Uterus (tissue), 4 donors: ENCODE measurements at regions of chr2 and their contacts with region 1.

Region 1: DNA sequence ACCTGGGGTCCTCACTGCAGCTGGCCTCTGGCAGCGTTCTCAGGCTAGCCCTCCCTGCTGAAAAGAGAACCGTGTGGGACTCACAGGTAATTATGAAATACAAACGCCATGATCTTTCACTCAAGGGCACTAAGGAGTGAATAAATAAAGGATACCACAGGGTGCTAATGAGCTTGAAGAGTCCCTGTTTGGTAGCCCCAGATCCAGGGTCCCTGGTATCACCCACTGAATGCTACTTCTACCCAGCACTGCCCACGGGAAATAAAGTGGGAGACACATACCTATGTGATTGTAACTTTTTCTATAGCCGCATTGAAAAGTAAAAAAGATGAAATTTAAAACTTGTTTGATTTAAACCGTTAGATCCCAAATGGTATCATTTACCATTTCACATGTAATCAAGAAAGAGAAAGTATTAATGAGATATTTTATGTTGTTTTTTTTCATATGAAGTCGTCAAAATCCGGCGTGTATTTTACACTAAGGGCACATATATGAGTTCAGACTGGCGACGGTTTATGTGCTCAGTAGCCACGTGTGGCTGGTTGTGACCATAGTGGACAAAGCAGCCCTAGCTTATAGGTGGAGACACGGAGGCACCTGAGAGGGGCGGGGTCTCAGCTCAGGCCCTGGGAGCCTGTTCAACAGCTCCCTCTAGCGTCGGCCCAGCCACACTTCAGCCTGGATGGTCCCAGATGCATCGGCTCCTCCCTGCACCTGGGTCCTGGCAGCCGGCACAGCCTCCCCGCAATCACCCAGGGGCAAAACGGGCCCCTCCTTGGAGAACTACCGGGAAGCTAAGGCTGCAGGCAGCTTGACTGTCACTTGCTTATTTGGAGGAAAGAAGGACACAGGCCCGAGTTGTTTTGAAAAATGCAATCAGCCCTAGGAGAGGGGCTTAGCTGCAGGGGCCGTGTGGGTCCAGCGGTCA is 39.2 kb downstream of the ODC1 start:
- DNase-seq: peak; percentile 77 to 81
- H3K4me3 ChIP-seq: no peak overlapping the region
- H3K27ac ChIP-seq: peak overlapping the region; percentile 78 to 81
- H3K4me1 ChIP-seq: peaks cover 0 to 31% of the 10 kb centered on the region in 2 donors
- H3K27me3 ChIP-seq: no peaks in the 10 kb centered on the region
- CTCF ChIP-seq: peak; percentile 91 to 96 (median 93)
- POLR2A ChIP-seq: no peak

Region 2: GRCh38 chr2:10079234-10079869 is 329.6 kb before region 1 on chr2:
- intact Hi-C with region 1: no loop called
- DNase-seq: peak; percentile 58 to 69
- H3K4me3 ChIP-seq: peak overlapping the region; percentile 34 to 72
- H3K27ac ChIP-seq: peak overlapping the region; percentile 87 to 94
- H3K4me1 ChIP-seq: peaks cover 0 to 9% of the 10 kb centered on the region in 2 donors
- H3K27me3 ChIP-seq: no peaks in the 10 kb centered on the region
- CTCF ChIP-seq: no peak
- POLR2A ChIP-seq: no peak

Region 3: DNA sequence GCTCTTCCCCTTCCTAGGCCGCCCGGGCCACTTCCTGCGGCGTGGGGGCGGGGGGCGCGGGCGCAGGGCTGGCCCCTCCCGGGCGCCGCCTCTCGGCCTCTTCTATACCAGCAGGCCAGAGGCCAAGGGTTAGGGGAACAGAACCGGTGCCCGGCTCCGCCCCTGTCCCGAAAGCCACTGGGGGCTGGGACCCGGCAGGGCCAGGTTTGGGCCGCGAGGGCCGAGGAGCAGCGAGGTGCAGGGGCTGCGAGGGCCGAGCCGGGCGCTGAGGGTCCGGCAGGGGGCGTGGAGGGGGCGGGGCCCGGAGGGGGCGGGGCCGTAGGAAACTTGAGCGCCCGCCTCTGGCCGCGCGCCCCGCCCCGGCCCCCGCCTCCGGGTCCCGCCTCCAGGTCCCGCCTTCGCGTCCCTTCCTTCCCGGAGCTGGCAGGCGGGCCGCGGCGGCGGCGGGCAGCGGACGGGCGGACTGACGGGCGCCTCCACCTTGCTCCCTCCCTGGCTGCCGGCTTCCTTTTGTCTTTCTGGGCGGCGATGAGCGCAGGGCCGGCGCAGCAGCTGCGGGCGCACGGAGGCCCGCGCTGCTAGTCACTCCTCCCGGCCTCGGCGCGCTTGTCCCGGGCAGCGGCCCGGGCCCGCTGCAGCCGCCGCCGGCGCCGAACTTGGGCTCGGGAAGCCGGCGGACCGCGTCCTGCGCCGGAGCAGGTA is 106.3 kb before region 1 on chr2 and contains the start of gene HPCAL1:
- intact Hi-C with region 1: loop called (anchors 10 kb)
- DNase-seq: peak; percentile 85 to 86
- H3K4me3 ChIP-seq: peak within 1 kb of the TSS; percentile 52 to 65
- H3K27ac ChIP-seq: peak within 1 kb of the TSS; percentile 86 to 89
- H3K4me1 ChIP-seq: no peaks in the 10 kb centered on the region
- H3K27me3 ChIP-seq: no peaks in the 10 kb centered on the region
- CTCF ChIP-seq: peak; percentile 46 to 69 (median 61)
- POLR2A ChIP-seq: peak; percentile 94 to 98
- total RNA-seq, gene HPCAL1: 11.1 to 122 (median 48.9) TPM

Region 4: DNA sequence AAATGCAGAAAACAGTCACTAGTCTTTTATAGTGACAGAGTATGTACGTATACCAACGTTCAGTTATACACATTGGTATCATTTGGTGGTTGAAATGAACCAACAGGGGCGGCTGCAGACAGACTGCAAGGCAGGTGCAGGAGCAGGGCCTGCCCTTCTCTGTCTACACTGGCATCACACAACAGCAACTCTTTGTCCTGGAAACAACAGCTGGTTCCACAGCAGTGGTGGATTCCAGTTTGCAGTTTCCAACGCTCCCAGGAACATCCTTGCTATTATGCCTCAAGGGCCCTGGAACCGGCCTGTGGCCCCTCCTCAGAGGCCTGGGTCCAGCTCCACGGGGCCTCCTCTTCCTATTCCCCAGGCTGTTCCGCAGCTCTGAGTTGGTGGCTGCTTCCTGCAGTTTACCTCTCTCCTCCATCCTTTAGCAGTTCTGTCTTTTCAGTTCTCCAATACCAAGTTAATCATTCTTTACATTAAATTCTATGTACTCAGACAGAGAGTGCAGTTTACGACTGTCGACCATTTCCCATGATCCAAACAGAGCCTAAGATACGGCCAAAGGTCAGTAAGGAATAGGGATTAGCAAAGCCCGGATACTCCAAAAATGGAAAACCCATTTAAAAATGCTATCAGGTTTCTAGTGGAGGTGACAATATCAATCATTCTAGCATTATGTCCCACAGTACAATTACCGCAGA is 193.1 kb after region 1 on chr2:
- intact Hi-C with region 1: no loop called
- DNase-seq: no peak
- H3K4me3 ChIP-seq: no peak overlapping the region
- H3K27ac ChIP-seq: no peak overlapping the region
- H3K4me1 ChIP-seq: no peaks in the 10 kb centered on the region
- H3K27me3 ChIP-seq: no peaks in the 10 kb centered on the region
- CTCF ChIP-seq: no peak
- POLR2A ChIP-seq: no peak